ENCODE measurements at regions of chr1 and their contacts with region 1.

Region 1: GRCh38 chr1:209805875-209806760 is at the start of gene IRF6:
- DNase-seq: peak; percentile 73
- H3K4me3 Mint-ChIP-seq: peak within 1 kb of the TSS; percentile 75
- H3K27ac Mint-ChIP-seq: peak within 1 kb of the TSS; percentile 55
- H3K4me1 Mint-ChIP-seq: peaks cover 9% of the 10 kb centered on the region
- H3K27me3 Mint-ChIP-seq: peaks cover 5% of the 10 kb centered on the region
- total RNA-seq, gene IRF6: 0.07 to 0.31 TPM

Region 2: GRCh38 chr1:209784265-209785169 is 21.6 kb before region 1 on chr1 and contains the start of gene C1orf74:
- CTCF ChIA-PET with region 1: no interaction called
- POLR2A ChIA-PET with region 1: no interaction called
- intact Hi-C with region 1: loop called (anchors 1 kb)
- DNase-seq: peak; percentile 100
- H3K4me3 Mint-ChIP-seq: peak within 1 kb of the TSS; percentile 93
- H3K27ac Mint-ChIP-seq: peak within 1 kb of the TSS; percentile 93
- H3K4me1 Mint-ChIP-seq: peaks cover 39% of the 10 kb centered on the region
- H3K27me3 Mint-ChIP-seq: peaks cover 3% of the 10 kb centered on the region
- total RNA-seq, gene C1orf74: 3.5 to 3.9 TPM